Activated B cell treated with CpG ODN at 0.5 μM for 24 hours (primary cell): ENCODE measurements at regions of chr2 and their contacts with region 1.

Region 1: GRCh38 chr2:128321784-128322714 is 3.4 kb upstream of the HS6ST1 start:
- DNase-seq: peak; percentile 87
- ATAC-seq: peak; percentile 56
- H3K4me3 Mint-ChIP-seq: peak overlapping the region; percentile 78
- H3K27ac Mint-ChIP-seq: peak overlapping the region; percentile 12
- H3K4me1 Mint-ChIP-seq: peaks cover 12% of the 10 kb centered on the region
- H3K27me3 Mint-ChIP-seq: no peaks in the 10 kb centered on the region
- CTCF ChIP-seq: no peak

Region 2: DNA sequence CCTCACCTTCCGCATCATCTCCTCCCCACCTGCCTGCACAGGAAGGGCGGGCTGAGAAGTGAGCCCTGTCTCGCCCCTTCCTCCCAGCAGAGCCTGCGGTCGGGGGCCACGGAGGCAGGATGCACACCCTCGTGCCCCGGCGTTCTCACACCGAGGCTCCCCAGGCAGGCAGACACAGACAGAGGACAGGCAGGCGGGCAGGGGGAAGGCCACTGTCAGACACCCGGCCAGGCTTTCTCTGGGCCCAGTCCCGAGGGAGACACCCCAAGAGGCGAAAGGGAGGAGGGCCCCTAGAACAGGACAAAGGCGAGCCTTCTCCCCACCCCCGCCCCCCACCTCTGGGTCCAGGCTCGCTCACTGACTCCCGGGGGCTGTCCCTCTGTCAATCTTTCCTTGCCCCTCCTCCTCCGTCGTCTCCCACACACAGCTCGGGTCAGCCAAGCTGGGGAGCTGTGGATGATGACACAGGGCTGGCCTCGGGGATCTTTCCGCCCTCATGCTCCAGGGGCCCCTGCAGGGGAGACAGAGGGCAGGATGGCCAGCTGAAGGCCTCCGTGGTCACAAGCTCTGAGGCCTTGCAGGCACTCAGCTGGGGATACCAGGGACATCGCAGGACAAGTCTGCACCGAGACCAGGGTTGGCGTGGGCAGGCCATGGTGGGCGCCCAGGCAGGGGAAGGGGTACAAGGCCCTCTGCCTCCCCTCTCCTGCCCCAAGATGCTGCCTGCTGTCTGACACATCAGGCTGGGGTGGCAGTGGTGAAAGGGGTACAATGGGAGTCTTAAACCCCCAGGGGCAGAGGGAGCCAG is 1240.0 kb before region 1 on chr2:
- CTCF ChIA-PET with region 1: no interaction called
- POLR2A ChIA-PET with region 1: no interaction called
- intact Hi-C with region 1: loop called (anchors 5 kb)
- DNase-seq: peak; percentile 59
- ATAC-seq: peak; percentile 66
- H3K4me3 Mint-ChIP-seq: peak overlapping the region; percentile 84
- H3K27ac Mint-ChIP-seq: peak overlapping the region; percentile 95
- H3K4me1 Mint-ChIP-seq: peaks cover 92% of the 10 kb centered on the region
- H3K27me3 Mint-ChIP-seq: no peaks in the 10 kb centered on the region
- CTCF ChIP-seq: no peak

Region 3: GRCh38 chr2:127951026-127951425 is 371.0 kb before region 1 on chr2:
- CTCF ChIA-PET with region 1: no interaction called
- POLR2A ChIA-PET with region 1: no interaction called
- intact Hi-C with region 1: no loop called
- DNase-seq: no peak
- ATAC-seq: no peak
- H3K4me3 Mint-ChIP-seq: no peak overlapping the region
- H3K27ac Mint-ChIP-seq: no peak overlapping the region
- H3K4me1 Mint-ChIP-seq: no peaks in the 10 kb centered on the region
- H3K27me3 Mint-ChIP-seq: no peaks in the 10 kb centered on the region
- CTCF ChIP-seq: no peak

Region 4: GRCh38 chr2:128178650-128179460 is 143.2 kb before region 1 on chr2:
- CTCF ChIA-PET with region 1: interaction called, 3 read pairs
- POLR2A ChIA-PET with region 1: no interaction called
- intact Hi-C with region 1: loop called (anchors 10 kb)
- DNase-seq: no peak
- ATAC-seq: peak; percentile 37
- H3K4me3 Mint-ChIP-seq: no peak overlapping the region
- H3K27ac Mint-ChIP-seq: no peak overlapping the region
- H3K4me1 Mint-ChIP-seq: no peaks in the 10 kb centered on the region
- H3K27me3 Mint-ChIP-seq: no peaks in the 10 kb centered on the region
- CTCF ChIP-seq: no peak

Region 5: DNA sequence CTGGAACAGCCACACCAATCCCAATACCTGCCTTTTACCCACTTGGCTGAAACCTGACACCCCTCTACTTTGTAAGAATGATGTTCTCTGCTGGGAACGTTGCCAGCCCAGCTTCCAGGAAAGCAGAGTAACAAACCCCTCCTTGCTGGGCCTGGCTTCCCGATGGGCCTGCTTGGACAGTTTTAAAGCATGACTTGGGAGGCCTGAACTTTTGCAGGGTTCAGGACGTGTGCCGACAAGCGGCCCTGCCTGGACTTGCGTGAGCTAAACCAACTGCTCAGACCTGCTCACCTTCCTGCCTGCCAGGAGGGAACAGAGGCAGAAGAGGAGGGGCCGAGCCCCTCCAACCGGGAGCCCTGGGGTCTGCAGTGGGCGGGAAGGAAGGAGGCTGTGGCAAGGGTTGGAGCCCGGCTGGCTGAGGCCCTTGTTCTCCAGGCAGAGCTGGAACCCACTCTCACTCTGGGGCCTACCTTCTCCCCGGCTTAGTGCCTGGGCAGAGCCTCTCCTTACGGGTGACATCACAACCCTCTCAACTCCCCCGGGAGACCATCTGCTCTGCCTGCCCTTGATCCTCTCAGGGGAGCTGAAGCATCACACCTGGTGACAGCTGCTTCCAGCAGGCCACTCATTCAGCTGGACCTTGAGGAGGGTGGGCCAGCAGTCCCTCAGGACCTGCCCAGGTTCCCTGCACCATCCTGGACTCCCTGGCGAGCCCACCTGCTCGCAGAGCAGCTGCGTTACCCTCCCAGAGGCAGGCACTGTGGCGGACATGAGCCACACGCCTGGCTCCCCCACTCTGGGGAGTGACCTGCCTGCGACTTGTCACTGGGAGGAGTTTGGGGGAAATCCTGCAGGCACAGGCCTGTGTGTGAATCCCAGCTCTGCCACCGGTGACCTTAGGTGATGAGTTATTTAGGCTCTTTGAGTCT is 16.6 kb before region 1 on chr2:
- CTCF ChIA-PET with region 1: interaction called, 3 read pairs
- POLR2A ChIA-PET with region 1: interaction called, 8 read pairs
- intact Hi-C with region 1: loop called (anchors 1 kb)
- DNase-seq: no peak
- ATAC-seq: peak; percentile 97
- H3K4me3 Mint-ChIP-seq: peak overlapping the region; percentile 4
- H3K27ac Mint-ChIP-seq: no peak overlapping the region
- H3K4me1 Mint-ChIP-seq: peaks cover 40% of the 10 kb centered on the region
- H3K27me3 Mint-ChIP-seq: no peaks in the 10 kb centered on the region
- CTCF ChIP-seq: no peak

Region 6: GRCh38 chr2:128754246-128754724 is 432.2 kb after region 1 on chr2:
- CTCF ChIA-PET with region 1: no interaction called
- POLR2A ChIA-PET with region 1: no interaction called
- intact Hi-C with region 1: loop called (anchors 5 kb)
- DNase-seq: no peak
- ATAC-seq: peak; percentile 84
- H3K4me3 Mint-ChIP-seq: peak overlapping the region; percentile 39
- H3K27ac Mint-ChIP-seq: peak overlapping the region; percentile 43
- H3K4me1 Mint-ChIP-seq: peaks cover 57% of the 10 kb centered on the region
- H3K27me3 Mint-ChIP-seq: no peaks in the 10 kb centered on the region
- CTCF ChIP-seq: no peak

Region 7: DNA sequence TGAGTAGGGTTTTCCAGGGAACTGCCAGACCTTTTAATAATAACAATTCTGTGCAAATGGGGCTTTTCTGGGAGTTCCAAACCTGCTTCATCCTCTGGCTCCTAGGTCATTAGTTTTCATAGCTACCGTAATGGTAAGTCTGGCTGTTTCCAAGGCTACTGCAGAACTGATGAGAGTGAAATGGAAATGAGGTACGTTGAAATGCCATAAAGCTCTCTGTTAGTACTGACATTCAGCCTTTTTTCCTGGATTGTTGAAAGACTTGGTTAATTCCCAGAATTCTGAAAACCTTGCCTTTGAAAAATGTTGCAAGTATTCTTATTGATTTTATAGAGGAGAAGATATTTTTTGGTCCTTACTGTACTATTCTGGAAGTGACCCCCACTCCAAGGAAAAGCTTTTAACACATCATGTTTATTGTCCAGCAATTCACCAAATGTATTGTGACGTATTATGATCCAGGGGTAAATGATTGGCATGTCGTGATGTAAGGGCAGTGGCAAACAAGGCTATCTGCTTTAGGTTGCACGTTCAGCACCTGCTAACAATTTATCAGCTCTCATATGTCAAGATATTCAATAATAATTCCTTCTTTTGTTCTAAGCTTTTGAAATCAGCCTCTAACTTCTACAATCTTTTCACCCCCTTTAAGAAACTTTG is 890.4 kb after region 1 on chr2:
- CTCF ChIA-PET with region 1: no interaction called
- POLR2A ChIA-PET with region 1: no interaction called
- intact Hi-C with region 1: no loop called
- DNase-seq: no peak
- ATAC-seq: no peak
- H3K4me3 Mint-ChIP-seq: no peak overlapping the region
- H3K27ac Mint-ChIP-seq: no peak overlapping the region
- H3K4me1 Mint-ChIP-seq: no peaks in the 10 kb centered on the region
- H3K27me3 Mint-ChIP-seq: peaks cover 5% of the 10 kb centered on the region
- CTCF ChIP-seq: no peak

Region 8: DNA sequence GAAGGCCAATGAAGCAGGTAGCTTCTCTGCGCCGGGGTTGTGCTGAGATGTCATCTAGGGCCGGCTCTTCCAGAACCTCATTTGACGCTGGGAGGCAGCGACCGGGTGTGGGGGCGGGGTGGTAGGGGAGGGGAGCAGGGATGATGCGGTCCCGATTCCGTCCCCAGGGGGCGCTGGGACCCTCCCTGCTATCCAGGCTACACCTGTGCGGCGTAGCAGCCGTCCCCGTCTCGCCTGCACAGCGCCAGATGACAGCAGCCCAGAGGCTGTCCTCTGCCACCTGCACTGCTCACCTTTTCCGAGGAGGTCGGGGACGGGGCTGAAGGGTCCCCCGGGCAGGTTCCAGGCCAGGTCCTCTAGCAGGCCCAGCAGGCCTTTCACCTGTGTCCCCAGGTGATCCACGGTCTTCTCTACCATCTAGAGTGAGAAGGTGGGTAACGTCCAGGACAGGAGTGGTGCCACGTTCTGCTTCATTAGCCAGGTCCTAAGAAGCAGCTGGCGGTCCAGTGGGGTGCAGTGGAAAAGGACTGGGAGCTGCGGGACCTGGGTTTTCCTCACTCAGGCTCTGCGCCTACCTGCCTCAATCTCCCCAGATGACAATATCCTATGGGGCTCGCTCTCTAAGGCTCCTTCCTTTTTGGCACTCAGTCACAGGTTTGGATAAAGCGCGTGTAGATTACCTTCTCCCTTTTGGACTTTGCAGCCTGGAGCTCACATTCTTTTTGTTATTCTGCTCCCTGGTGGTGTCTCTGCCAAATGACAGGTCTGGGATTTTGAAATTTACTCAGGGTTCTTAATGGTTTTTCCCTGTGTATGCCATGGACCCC is 1601.4 kb after region 1 on chr2:
- CTCF ChIA-PET with region 1: no interaction called
- POLR2A ChIA-PET with region 1: no interaction called
- intact Hi-C with region 1: loop called (anchors 1 kb)
- DNase-seq: no peak
- ATAC-seq: peak; percentile 28
- H3K4me3 Mint-ChIP-seq: no peak overlapping the region
- H3K27ac Mint-ChIP-seq: no peak overlapping the region
- H3K4me1 Mint-ChIP-seq: peaks cover 9% of the 10 kb centered on the region
- H3K27me3 Mint-ChIP-seq: peaks cover 26% of the 10 kb centered on the region
- CTCF ChIP-seq: no peak